ENCODE measurements at regions of chr12 and their contacts with region 1.

Region 1: GRCh38 chr12:56189918-56190694 is 823 bp upstream of the SMARCC2 start:
- DNase-seq: peak; percentile 94

Region 2: GRCh38 chr12:55955344-55955743 is 234.8 kb before region 1 on chr12:
- intact Hi-C with region 1: no loop called
- DNase-seq: no peak

Region 3: DNA sequence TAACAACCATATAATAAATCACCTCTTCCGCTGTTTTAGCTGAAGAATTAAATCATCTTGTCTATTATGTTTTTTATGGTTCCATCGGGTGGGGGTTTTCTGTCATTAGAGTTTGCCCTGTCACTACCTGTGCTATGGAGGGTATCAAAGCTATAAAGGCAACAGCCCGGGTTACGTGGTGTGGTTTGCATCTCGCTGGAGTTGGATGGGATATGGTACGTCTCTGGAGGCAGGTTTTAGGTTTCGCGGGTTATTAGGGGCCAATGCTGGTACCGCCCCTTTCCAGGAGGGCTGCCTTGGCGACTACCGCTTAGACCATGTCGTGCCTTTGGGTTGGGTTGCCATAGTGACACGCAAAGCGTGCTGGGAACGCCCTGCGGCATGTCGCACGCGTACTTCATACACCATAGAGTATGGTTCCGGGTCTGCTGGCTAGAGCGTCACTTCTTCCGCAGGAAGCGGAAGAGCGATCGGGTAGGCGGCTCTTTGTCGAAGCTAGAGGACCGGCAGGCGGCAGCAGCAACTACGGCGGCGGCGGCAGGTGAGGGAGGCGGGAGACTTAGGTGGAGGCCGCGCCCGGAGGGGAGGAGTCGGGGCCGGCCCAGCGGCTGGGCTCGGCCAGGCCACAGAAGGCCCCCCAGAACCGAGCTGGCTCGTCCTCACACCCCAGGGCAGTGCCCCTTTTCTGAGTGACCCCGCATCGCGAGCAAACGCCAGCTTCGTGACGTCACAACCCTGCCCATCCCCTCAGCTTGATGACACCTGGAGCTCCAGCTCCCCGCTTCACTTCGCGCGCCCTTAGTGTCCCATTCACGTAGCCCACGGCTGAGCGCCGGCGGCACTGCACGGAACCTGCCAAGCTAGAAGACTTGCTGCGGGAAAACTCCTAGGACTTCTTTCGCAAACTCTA is 72.1 kb before region 1 on chr12 and contains the start of gene ZC3H10:
- intact Hi-C with region 1: loop called in 1 of 2 experiments (anchors 2 kb)
- DNase-seq: peak; percentile 99
- total RNA-seq, gene ZC3H10: 7.9 to 8.0 TPM

Region 4: GRCh38 chr12:56165369-56165768 is 24.7 kb before region 1 on chr12:
- intact Hi-C with region 1: no loop called
- DNase-seq: no peak

Region 5: DNA sequence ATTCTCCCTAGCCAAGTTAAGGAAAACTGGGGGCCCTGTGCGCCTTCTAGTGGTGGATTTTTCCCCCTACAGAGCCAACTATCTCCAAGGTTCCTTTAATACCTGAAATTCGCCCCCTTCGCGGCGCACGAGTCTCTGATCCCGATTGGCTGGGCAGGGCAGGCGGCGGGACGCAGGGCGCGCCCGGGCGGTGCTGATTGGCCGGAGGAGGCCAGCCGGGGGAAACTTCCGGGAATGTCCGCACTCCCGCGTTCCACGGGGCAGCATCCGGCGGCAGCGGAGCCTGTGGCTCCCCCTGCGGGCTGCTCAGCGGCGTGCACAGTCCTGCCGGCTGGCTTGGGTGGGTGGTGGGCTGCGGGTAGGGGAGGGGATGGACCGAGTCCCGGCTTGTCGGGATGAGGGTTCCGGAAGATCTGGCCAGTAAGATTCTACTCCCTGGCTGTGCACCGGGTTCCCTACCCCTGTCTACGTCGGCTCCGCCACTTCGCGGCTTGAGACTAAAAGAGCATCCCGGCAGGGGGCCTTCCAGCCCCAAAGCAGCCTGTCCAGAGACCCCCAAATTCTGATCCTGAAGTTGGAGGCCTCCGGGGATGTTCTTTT is 34.1 kb after region 1 on chr12 and contains the start of gene NABP2:
- intact Hi-C with region 1: loop called (anchors 2 kb)
- DNase-seq: peak; percentile 99
- total RNA-seq, gene NABP2: 19.9 to 23.1 TPM

Region 6: GRCh38 chr12:56257491-56258056 is 67.5 kb after region 1 on chr12:
- intact Hi-C with region 1: loop called in 1 of 2 experiments (anchors 5 kb)
- DNase-seq: no peak